Right ventricle myocardium inferior (tissue), 1 donor: ENCODE measurements at regions of chr6 and their contacts with region 1.

Region 1: DNA sequence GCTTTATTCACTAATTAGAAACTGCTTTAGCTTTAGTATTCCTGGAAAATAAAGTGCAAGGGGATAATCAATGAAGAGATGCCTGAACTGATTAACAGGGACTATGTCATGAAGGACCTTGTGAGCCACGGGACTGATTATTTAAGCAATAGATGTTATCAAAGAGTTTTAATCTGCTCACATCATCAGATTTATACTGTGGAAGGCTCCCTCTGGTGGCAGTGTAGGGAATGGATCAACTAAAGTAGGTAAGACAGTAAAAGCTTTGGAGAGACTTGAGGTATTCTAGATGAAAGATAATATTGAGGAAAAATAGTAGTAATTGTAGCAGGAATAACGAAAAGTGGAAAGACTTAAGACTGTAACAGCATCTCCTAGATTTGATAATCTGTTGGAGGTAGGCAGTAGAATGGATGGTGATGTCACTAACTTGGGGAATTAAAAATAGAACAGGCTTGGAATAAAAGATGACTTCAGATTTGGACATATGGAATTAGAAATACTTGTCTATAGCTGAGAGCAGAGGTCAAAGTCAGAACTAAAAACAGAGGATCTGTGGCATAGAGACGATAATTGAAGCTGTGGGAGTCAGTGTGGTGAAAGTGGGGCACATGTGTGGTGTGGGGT is 80.3 kb upstream of the HTR1E start:
- DNase-seq: no peak
- ATAC-seq: no peak

Region 2: GRCh38 chr6:85756982-85757381 is 1100.1 kb before region 1 on chr6:
- intact Hi-C with region 1: loop called (anchors 10 kb)
- DNase-seq: no peak
- ATAC-seq: no peak

Region 3: DNA sequence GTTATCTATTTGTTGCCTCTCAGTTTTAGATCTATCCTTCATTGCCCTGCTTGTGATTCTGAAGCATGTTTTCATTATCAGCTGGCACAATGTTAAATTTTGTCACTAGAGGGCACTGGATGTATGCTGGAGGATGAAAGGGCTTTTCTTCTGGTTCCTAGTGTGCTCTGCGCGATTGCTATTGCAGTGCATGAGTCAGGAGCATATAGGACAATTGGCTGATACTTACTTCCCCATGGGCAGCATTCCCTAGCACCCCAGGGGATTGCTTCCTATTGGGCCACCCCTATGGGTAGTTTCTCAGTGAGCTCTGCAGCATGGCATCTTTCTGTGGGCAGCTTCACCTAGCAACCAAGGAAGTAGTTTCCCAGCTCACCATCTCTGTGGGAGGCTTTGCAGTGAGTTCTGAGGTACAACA is 934.0 kb before region 1 on chr6:
- intact Hi-C with region 1: loop called (anchors 10 kb)
- DNase-seq: no peak
- ATAC-seq: peak; percentile 23

Region 4: GRCh38 chr6:86706448-86706847 is 150.6 kb before region 1 on chr6:
- intact Hi-C with region 1: no loop called
- DNase-seq: no peak
- ATAC-seq: no peak